Transverse colon (tissue), 4 donors: ENCODE measurements at regions of chr9 and their contacts with region 1.

Region 1: GRCh38 chr9:76808636-76809035 is 44.4 kb downstream of the PCA3 start:
- DNase-seq: no peak
- H3K4me3 ChIP-seq: no peak overlapping the region
- H3K27ac ChIP-seq: no peak overlapping the region
- H3K4me1 ChIP-seq: no peaks in the 10 kb centered on the region
- H3K27me3 ChIP-seq: peaks cover 7% of the 10 kb centered on the region
- CTCF ChIP-seq: no peak
- EP300 ChIP-seq: no peak
- POLR2A ChIP-seq: no peak

Region 2: GRCh38 chr9:75238311-75238978 is 1570.2 kb before region 1 on chr9:
- in situ Hi-C with region 1: no loop called
- intact Hi-C with region 1: no loop called
- DNase-seq: peak; percentile 48
- H3K4me3 ChIP-seq: no peak overlapping the region
- H3K27ac ChIP-seq: no peak overlapping the region
- H3K4me1 ChIP-seq: no peaks in the 10 kb centered on the region
- H3K27me3 ChIP-seq: no peaks in the 10 kb centered on the region
- CTCF ChIP-seq: peak; percentile 54 to 90 (median 75)
- EP300 ChIP-seq: no peak
- POLR2A ChIP-seq: no peak

Region 3: DNA sequence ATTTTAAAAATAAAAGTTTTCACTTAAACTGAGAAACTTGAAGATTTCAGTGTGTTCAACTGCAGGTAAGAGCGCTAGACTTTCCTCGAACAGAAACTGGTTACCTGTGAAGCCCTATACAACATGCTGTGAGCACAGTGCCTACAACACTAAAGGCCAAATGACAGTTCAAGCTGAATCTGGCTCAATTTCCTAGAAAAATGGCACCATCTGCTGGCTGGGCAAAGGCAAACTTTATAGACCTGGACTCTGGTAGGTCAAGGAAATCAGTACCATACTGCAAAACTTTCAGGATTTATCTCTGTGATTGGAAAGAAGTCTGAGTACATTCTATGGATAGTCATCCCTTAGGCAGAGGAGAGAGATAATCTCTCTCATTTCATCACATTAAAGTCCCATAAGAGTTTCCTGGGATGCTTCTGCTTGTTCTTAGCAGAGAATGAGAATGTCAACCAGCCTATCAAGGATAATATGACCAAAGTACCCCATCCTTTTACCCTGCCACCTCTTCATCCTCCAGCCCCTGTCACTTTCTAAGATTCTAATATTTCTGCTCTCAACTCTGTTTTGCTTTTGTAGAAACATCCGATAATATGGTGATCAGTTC is 179.1 kb after region 1 on chr9:
- in situ Hi-C with region 1: loop called in 2 of 4 experiments (anchors 5 to 10 kb)
- intact Hi-C with region 1: no loop called
- DNase-seq: peak; percentile 51
- H3K4me3 ChIP-seq: no peak overlapping the region
- H3K27ac ChIP-seq: no peak overlapping the region
- H3K4me1 ChIP-seq: no peaks in the 10 kb centered on the region
- H3K27me3 ChIP-seq: peaks cover 36% of the 10 kb centered on the region
- CTCF ChIP-seq: peak; percentile 51 to 66 (median 53)
- EP300 ChIP-seq: no peak
- POLR2A ChIP-seq: no peak

Region 4: DNA sequence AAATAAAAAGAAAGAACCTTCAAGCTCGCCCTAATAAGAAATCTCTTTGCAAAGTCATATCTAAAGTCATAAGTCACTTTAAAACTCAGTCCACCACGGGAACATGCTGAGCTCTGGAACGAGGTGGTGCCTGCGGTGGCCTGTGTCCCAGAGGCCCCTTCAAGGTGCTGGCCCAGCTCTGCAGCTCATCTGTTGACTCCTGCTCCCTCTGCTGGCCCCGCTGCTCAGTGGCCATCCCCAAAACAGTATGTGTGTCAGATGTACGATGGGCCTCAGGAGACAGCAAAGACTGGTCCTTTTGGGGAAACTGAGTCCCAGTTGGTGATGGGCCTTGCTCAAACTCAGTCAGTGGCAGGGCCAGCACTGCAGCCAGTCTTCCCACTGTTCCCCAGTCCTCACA is 188.1 kb after region 1 on chr9:
- in situ Hi-C with region 1: loop called in 2 of 4 experiments (anchors 10 kb)
- intact Hi-C with region 1: no loop called
- DNase-seq: no peak
- H3K4me3 ChIP-seq: no peak overlapping the region
- H3K27ac ChIP-seq: no peak overlapping the region
- H3K4me1 ChIP-seq: no peaks in the 10 kb centered on the region
- H3K27me3 ChIP-seq: peaks cover 17% of the 10 kb centered on the region
- CTCF ChIP-seq: peak; percentile 30 to 49 (median 45)
- EP300 ChIP-seq: no peak
- POLR2A ChIP-seq: no peak

Region 5: GRCh38 chr9:77038281-77039036 is 229.8 kb after region 1 on chr9:
- in situ Hi-C with region 1: no loop called
- intact Hi-C with region 1: no loop called
- DNase-seq: no peak
- H3K4me3 ChIP-seq: no peak overlapping the region
- H3K27ac ChIP-seq: no peak overlapping the region
- H3K4me1 ChIP-seq: no peaks in the 10 kb centered on the region
- H3K27me3 ChIP-seq: peaks cover 30% of the 10 kb centered on the region
- CTCF ChIP-seq: no peak
- EP300 ChIP-seq: no peak
- POLR2A ChIP-seq: no peak